Calu3 (cell line): ENCODE measurements at regions of chr10 and their contacts with region 1.

Region 1: GRCh38 chr10:120969219-120969645 is 118.1 kb downstream of the WDR11 start:
- DNase-seq: no peak
- H3K4me3 Mint-ChIP-seq: no peak overlapping the region
- H3K27ac Mint-ChIP-seq: no peak overlapping the region
- H3K4me1 Mint-ChIP-seq: peaks cover 9% of the 10 kb centered on the region
- H3K27me3 Mint-ChIP-seq: no peaks in the 10 kb centered on the region
- CTCF ChIP-seq: no peak

Region 2: DNA sequence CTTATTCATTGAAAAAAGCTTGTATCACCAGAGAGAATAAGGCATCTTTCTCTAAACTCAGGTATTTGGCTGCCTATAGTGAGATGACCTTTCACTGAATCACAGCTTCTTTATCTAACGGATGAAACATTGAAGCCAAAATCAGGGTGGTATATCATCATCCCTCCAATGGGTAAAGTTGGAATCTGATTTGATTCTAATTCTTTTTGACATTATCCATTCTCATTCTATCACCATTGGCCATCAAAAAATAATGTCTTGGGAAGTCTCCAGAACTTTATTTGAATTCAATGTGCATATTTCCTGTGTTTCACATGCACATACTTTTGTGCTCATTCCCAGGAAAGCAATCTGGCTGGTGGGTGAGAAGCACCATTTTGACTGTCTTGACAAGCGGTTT is 417.0 kb before region 1 on chr10:
- CTCF ChIA-PET with region 1: no interaction called
- intact Hi-C with region 1: no loop called
- DNase-seq: no peak
- H3K4me3 Mint-ChIP-seq: no peak overlapping the region
- H3K27ac Mint-ChIP-seq: no peak overlapping the region
- H3K4me1 Mint-ChIP-seq: no peaks in the 10 kb centered on the region
- H3K27me3 Mint-ChIP-seq: no peaks in the 10 kb centered on the region
- CTCF ChIP-seq: no peak

Region 3: GRCh38 chr10:121070275-121071065 is 101.2 kb after region 1 on chr10:
- CTCF ChIA-PET with region 1: no interaction called
- intact Hi-C with region 1: loop called (anchors 5 kb)
- DNase-seq: peak; percentile 17
- H3K4me3 Mint-ChIP-seq: no peak overlapping the region
- H3K27ac Mint-ChIP-seq: no peak overlapping the region
- H3K4me1 Mint-ChIP-seq: no peaks in the 10 kb centered on the region
- H3K27me3 Mint-ChIP-seq: no peaks in the 10 kb centered on the region
- CTCF ChIP-seq: no peak